CD8-positive, alpha-beta T cell (primary cell): ENCODE measurements at regions of chr1 and their contacts with region 1.

Region 1: GRCh38 chr1:117534995-117535467 is 70.8 kb upstream of the TENT5C start:
- DNase-seq: peak in 8 of 9 experiments; percentile 8 to 79 (median 32)
- ATAC-seq: peak; percentile 89
- H3K4me3 ChIP-seq: no peak overlapping the region
- H3K4me3 Mint-ChIP-seq: no peak overlapping the region
- H3K27ac ChIP-seq: no peak overlapping the region
- H3K27ac Mint-ChIP-seq: no peak overlapping the region
- H3K4me1 ChIP-seq: peaks cover 13% of the 10 kb centered on the region
- H3K4me1 Mint-ChIP-seq: peaks cover 2% of the 10 kb centered on the region
- H3K27me3 ChIP-seq: no peaks in the 10 kb centered on the region
- H3K27me3 Mint-ChIP-seq: no peaks in the 10 kb centered on the region
- CTCF ChIP-seq: peak; percentile 61

Region 2: GRCh38 chr1:117250061-117250606 is 284.9 kb before region 1 on chr1:
- CTCF ChIA-PET with region 1: no interaction called
- POLR2A ChIA-PET with region 1: no interaction called
- intact Hi-C with region 1: no loop called
- DNase-seq: no peak
- ATAC-seq: no peak
- H3K4me3 ChIP-seq: no peak overlapping the region
- H3K4me3 Mint-ChIP-seq: no peak overlapping the region
- H3K27ac ChIP-seq: no peak overlapping the region
- H3K27ac Mint-ChIP-seq: no peak overlapping the region
- H3K4me1 ChIP-seq: no peaks in the 10 kb centered on the region
- H3K4me1 Mint-ChIP-seq: no peaks in the 10 kb centered on the region
- H3K27me3 ChIP-seq: peaks cover 0 to 2% of the 10 kb centered on the region in 2 experiments
- H3K27me3 Mint-ChIP-seq: peaks cover 2% of the 10 kb centered on the region
- CTCF ChIP-seq: no peak

Region 3: DNA sequence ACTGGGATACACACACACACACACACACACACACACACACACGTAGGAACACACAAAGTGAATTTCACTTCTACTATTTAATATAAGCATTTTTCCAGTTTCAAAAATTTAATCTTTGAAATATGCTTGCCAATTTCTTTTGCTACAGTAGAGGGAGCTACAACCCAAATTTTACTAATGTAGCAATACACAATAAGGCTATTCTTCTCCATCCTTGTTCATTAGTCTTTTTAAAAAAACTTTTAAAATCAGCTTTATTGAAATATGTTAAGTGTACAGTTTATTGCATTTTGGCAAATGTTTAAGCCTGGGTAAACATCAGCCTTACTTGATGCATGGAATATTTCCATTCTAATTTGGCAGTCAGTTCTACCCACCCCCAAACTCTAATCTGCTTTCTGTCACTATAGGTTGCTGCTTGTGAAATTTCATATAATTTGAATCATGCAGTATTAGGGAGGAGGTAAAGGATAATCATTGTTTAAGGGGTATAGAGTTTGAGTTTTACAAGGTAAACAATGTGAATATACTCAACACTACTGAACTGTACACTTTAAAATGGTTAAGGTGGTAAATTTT is 22.2 kb before region 1 on chr1:
- CTCF ChIA-PET with region 1: interaction called, 38 read pairs
- POLR2A ChIA-PET with region 1: no interaction called
- intact Hi-C with region 1: no loop called
- DNase-seq: peak in 2 of 9 experiments; percentile 35 to 46
- ATAC-seq: peak; percentile 46
- H3K4me3 ChIP-seq: no peak overlapping the region
- H3K4me3 Mint-ChIP-seq: no peak overlapping the region
- H3K27ac ChIP-seq: no peak overlapping the region
- H3K27ac Mint-ChIP-seq: no peak overlapping the region
- H3K4me1 ChIP-seq: no peaks in the 10 kb centered on the region
- H3K4me1 Mint-ChIP-seq: no peaks in the 10 kb centered on the region
- H3K27me3 ChIP-seq: no peaks in the 10 kb centered on the region
- H3K27me3 Mint-ChIP-seq: no peaks in the 10 kb centered on the region
- CTCF ChIP-seq: peak; percentile 80

Region 4: GRCh38 chr1:117562581-117563520 is 27.8 kb after region 1 on chr1:
- CTCF ChIA-PET with region 1: interaction called, 25 read pairs
- POLR2A ChIA-PET with region 1: no interaction called
- intact Hi-C with region 1: no loop called
- DNase-seq: peak in 1 of 9 experiments; percentile 34
- ATAC-seq: no peak
- H3K4me3 ChIP-seq: no peak overlapping the region
- H3K4me3 Mint-ChIP-seq: no peak overlapping the region
- H3K27ac ChIP-seq: no peak overlapping the region
- H3K27ac Mint-ChIP-seq: no peak overlapping the region
- H3K4me1 ChIP-seq: no peaks in the 10 kb centered on the region
- H3K4me1 Mint-ChIP-seq: no peaks in the 10 kb centered on the region
- H3K27me3 ChIP-seq: no peaks in the 10 kb centered on the region
- H3K27me3 Mint-ChIP-seq: peaks cover 2% of the 10 kb centered on the region
- CTCF ChIP-seq: no peak

Region 5: GRCh38 chr1:117590271-117590925 is 55.4 kb after region 1 on chr1:
- CTCF ChIA-PET with region 1: interaction called, 10 read pairs
- POLR2A ChIA-PET with region 1: no interaction called
- intact Hi-C with region 1: no loop called
- DNase-seq: no peak
- ATAC-seq: no peak
- H3K4me3 ChIP-seq: no peak overlapping the region
- H3K4me3 Mint-ChIP-seq: no peak overlapping the region
- H3K27ac ChIP-seq: no peak overlapping the region
- H3K27ac Mint-ChIP-seq: no peak overlapping the region
- H3K4me1 ChIP-seq: no peaks in the 10 kb centered on the region
- H3K4me1 Mint-ChIP-seq: no peaks in the 10 kb centered on the region
- H3K27me3 ChIP-seq: no peaks in the 10 kb centered on the region
- H3K27me3 Mint-ChIP-seq: no peaks in the 10 kb centered on the region
- CTCF ChIP-seq: no peak

Region 6: DNA sequence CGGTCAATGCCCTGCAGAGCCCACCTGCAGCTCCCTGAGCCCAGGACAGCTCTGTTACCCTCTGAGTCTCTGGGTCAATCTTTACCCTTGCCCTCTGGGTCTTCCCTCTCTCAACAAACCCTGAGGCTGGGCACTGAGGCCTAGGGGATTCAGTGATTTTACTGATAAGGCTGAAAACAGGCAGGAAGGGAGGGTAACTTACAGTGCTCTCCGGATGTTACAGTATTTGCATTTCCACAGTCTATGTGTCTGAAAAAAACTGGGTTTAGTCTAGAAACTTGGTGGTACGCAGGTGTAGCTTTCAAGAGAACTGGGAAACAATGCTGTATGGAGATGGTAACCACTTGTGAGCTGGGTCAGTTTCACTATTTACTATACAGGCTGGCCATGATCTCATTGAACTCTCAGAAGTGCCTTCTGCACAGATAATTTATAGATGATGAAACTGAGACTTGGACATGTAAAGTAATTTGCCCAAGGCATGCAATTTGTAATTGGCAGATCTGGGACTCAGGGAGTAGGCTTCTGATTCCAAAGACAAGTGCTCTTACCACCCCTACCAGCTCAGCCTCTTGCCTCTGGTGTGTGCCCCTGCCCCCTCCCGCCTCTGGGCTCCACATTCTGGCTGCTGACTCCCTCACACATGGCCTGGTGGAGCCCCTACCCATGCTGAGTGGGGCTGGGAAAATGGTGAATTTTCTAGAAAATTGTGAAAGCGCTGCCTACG is 119.6 kb after region 1 on chr1:
- CTCF ChIA-PET with region 1: interaction called, 29 read pairs
- POLR2A ChIA-PET with region 1: interaction called, 8 read pairs
- intact Hi-C with region 1: loop called in 1 of 2 experiments (anchors 5 kb)
- DNase-seq: peak in 2 of 9 experiments; percentile 40 to 64
- ATAC-seq: peak; percentile 7
- H3K4me3 ChIP-seq: no peak overlapping the region
- H3K4me3 Mint-ChIP-seq: peak overlapping the region; percentile 40
- H3K27ac ChIP-seq: peak overlapping the region in 1 of 2 experiments; percentile 70
- H3K27ac Mint-ChIP-seq: peak overlapping the region; percentile 94
- H3K4me1 ChIP-seq: peaks cover 69% of the 10 kb centered on the region
- H3K4me1 Mint-ChIP-seq: peaks cover 83% of the 10 kb centered on the region
- H3K27me3 ChIP-seq: peaks cover 2 to 10% of the 10 kb centered on the region in 2 experiments
- H3K27me3 Mint-ChIP-seq: peaks cover 30% of the 10 kb centered on the region
- CTCF ChIP-seq: no peak

Region 7: DNA sequence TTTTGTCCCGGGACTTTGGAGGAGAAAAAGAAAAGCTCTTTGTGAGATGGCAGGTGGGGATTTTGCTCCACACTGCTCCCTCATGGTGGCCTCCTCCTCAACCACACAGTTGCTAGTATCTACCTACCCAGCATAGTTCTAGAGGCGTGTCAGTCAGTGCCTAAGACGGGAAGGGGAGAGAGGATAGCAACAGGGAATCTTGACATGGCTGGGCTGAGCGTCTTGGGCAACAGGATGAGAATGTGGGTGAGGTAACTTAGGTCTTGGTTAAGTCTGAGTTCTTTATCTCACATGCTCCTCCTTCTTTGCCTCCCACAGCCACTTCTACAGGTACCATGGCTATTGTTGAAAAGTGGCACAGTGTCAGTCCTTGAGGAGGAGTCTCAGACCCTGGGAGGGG is 146.1 kb after region 1 on chr1:
- CTCF ChIA-PET with region 1: interaction called, 263 read pairs
- POLR2A ChIA-PET with region 1: no interaction called
- intact Hi-C with region 1: no loop called
- DNase-seq: no peak
- ATAC-seq: no peak
- H3K4me3 ChIP-seq: no peak overlapping the region
- H3K4me3 Mint-ChIP-seq: no peak overlapping the region
- H3K27ac ChIP-seq: no peak overlapping the region
- H3K27ac Mint-ChIP-seq: no peak overlapping the region
- H3K4me1 ChIP-seq: no peaks in the 10 kb centered on the region
- H3K4me1 Mint-ChIP-seq: no peaks in the 10 kb centered on the region
- H3K27me3 ChIP-seq: no peaks in the 10 kb centered on the region
- H3K27me3 Mint-ChIP-seq: peaks cover 8% of the 10 kb centered on the region
- CTCF ChIP-seq: no peak

Region 8: GRCh38 chr1:117695796-117696490 is 160.9 kb after region 1 on chr1:
- CTCF ChIA-PET with region 1: interaction called, 16 read pairs
- POLR2A ChIA-PET with region 1: no interaction called
- intact Hi-C with region 1: no loop called
- DNase-seq: no peak
- ATAC-seq: no peak
- H3K4me3 ChIP-seq: no peak overlapping the region
- H3K4me3 Mint-ChIP-seq: no peak overlapping the region
- H3K27ac ChIP-seq: no peak overlapping the region
- H3K27ac Mint-ChIP-seq: no peak overlapping the region
- H3K4me1 ChIP-seq: no peaks in the 10 kb centered on the region
- H3K4me1 Mint-ChIP-seq: no peaks in the 10 kb centered on the region
- H3K27me3 ChIP-seq: peaks cover 0 to 2% of the 10 kb centered on the region in 2 experiments
- H3K27me3 Mint-ChIP-seq: peaks cover 7% of the 10 kb centered on the region
- CTCF ChIP-seq: no peak